ENCODE measurements at regions of chr21 and their contacts with region 1.

Region 1: GRCh38 chr21:31866077-31866511 is 6.7 kb upstream of the HUNK start:
- DNase-seq: peak; percentile 76 to 82 (median 81)
- ATAC-seq: peak; percentile 98
- H3K4me3 ChIP-seq: no peak overlapping the region
- H3K27ac ChIP-seq: no peak overlapping the region
- H3K4me1 ChIP-seq: peaks cover 0 to 4% of the 10 kb centered on the region in 2 experiments; a peak in 1 of 5 replicates
- H3K27me3 ChIP-seq: peaks cover 9% of the 10 kb centered on the region in 2 experiments; a peak in 4 of 5 replicates
- CTCF ChIP-seq: peak; percentile 82 to 91 (median 83)
- EP300 ChIP-seq: no peak
- POLR2A ChIP-seq: no peak
- RAD21 ChIP-seq: peak; percentile 53 to 70

Region 2: DNA sequence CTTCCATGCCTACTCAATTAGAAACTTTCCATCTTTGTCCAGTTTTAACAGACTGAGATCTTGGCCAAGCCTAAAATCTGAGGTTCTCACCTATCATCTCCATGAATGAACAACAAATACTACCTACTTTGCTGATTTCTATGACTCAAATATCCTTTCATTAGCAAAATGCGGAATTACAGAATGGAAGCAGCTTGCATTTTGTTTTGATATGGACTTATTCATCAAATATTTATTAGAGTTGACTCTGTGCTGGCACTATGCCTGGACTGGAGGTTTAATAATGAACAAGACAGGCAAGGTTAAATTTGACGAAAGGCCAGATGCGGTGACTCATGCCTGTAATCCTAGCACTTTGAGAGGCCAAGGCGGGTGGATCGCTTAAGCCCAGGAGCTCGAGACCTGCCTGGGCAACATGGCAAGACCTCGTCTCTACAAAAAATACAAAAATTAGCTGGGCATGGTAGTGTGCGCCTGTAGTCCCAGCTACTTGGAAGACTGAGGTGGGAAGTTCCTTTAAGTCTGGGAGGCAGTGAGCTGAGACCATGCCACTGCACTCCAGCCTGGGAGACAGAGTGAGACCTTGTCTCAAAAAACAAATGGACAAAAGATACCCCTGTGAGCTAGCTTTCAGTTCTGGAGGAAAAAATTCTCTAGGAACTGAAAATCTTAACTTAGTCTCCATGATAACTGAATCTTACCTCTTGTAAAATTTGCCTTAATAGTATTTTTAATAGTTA is 236.0 kb before region 1 on chr21:
- CTCF ChIA-PET with region 1: no interaction called
- POLR2A ChIA-PET with region 1: no interaction called
- in situ Hi-C with region 1: no loop called
- intact Hi-C with region 1: loop called (anchors 10 kb)
- DNase-seq: no peak
- ATAC-seq: no peak
- H3K4me3 ChIP-seq: no peak overlapping the region
- H3K27ac ChIP-seq: no peak overlapping the region
- H3K4me1 ChIP-seq: no peaks in the 10 kb centered on the region
- H3K27me3 ChIP-seq: peaks cover 39 to 41% of the 10 kb centered on the region in 2 experiments
- CTCF ChIP-seq: no peak
- EP300 ChIP-seq: no peak
- POLR2A ChIP-seq: no peak
- RAD21 ChIP-seq: no peak

Region 3: GRCh38 chr21:31837618-31838390 is 28.3 kb before region 1 on chr21:
- CTCF ChIA-PET with region 1: no interaction called
- POLR2A ChIA-PET with region 1: no interaction called
- in situ Hi-C with region 1: no loop called
- intact Hi-C with region 1: no loop called
- DNase-seq: no peak
- ATAC-seq: no peak
- H3K4me3 ChIP-seq: no peak overlapping the region
- H3K27ac ChIP-seq: no peak overlapping the region
- H3K4me1 ChIP-seq: no peaks in the 10 kb centered on the region
- H3K27me3 ChIP-seq: 0 out of 5 replicates have a peak, but pooled peaks cover 0 to 5% of the 10 kb centered on the region in 2 experiments
- CTCF ChIP-seq: no peak
- EP300 ChIP-seq: no peak
- POLR2A ChIP-seq: no peak
- RAD21 ChIP-seq: no peak

Region 4: DNA sequence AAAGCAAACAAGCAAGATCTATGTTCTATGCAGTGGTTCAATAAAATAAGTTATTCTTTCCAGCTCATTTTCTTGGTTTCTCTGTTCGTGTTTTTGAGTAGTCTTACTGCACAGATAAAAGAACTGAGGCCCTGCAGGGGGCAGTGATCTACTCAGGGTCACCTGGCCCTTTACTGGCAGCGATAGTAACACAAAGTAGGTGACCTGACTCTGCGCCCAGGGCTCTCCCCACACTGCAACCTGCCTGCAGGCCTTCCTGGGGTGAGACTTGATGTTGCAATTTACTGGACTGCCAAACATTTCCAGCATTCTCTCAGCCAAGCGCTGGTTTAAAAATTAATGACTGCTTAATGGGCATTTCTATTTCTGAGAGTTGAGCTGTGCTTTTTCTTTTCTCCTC is 117.0 kb after region 1 on chr21:
- CTCF ChIA-PET with region 1: no interaction called
- POLR2A ChIA-PET with region 1: no interaction called
- in situ Hi-C with region 1: no loop called
- intact Hi-C with region 1: loop called (anchors 5 kb)
- DNase-seq: no peak
- ATAC-seq: peak; percentile 31; the same call in 2 of the 3 replicates
- H3K4me3 ChIP-seq: no peak overlapping the region
- H3K27ac ChIP-seq: no peak overlapping the region
- H3K4me1 ChIP-seq: no peaks in the 10 kb centered on the region
- H3K27me3 ChIP-seq: peaks cover 0 to 23% of the 10 kb centered on the region in 2 experiments; a peak in 3 of 5 replicates
- CTCF ChIP-seq: no peak
- EP300 ChIP-seq: no peak
- POLR2A ChIP-seq: no peak
- RAD21 ChIP-seq: no peak

Measured in K562 (cell line).